MCF 10A (cell line): ENCODE measurements at regions of chr3 and their contacts with region 1.

Region 1: DNA sequence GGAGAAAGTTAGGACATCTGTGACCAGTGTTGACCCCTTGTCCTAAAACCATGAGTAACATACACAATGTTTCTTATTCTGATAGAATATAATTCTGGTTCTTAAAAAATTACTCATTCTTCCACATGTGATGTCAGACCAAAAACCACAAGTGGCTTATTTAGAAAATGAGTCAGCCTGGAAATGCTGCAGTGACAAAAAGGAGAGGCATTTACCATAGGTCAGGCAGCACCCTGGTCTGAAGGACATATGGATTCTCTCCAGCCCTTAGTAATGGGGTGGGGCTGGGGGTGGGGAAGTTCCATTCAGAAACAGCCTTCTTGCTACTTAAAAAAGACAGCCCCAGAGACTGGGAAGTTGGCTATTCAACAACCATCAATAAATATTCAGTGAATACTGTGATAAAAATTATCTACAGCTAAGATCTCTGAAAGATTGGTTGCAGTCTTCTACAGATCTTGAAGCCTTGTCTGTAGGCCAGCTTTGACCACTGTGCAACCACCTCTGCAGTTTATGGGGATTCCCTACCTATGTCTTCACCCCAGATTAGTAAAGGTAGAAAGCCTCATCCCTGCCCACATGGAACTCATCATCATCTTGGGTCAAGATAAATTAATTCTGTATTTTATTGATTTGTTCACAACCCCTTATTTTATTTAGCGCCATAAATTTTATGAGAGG is 34.9 kb upstream of the TIMP4 start:
- DNase-seq: peak; percentile 97
- H3K4me3 Mint-ChIP-seq: peak overlapping the region; percentile 24
- H3K27ac Mint-ChIP-seq: peak overlapping the region; percentile 89
- H3K4me1 Mint-ChIP-seq: peaks cover 42% of the 10 kb centered on the region
- H3K27me3 Mint-ChIP-seq: no peaks in the 10 kb centered on the region
- CTCF ChIP-seq: no peak

Region 2: GRCh38 chr3:11919390-11919789 is 274.2 kb before region 1 on chr3:
- CTCF ChIA-PET with region 1: no interaction called
- POLR2A ChIA-PET with region 1: no interaction called
- intact Hi-C with region 1: no loop called
- DNase-seq: no peak
- H3K4me3 Mint-ChIP-seq: no peak overlapping the region
- H3K27ac Mint-ChIP-seq: no peak overlapping the region
- H3K4me1 Mint-ChIP-seq: no peaks in the 10 kb centered on the region
- H3K27me3 Mint-ChIP-seq: peaks cover 14% of the 10 kb centered on the region
- CTCF ChIP-seq: no peak

Region 3: DNA sequence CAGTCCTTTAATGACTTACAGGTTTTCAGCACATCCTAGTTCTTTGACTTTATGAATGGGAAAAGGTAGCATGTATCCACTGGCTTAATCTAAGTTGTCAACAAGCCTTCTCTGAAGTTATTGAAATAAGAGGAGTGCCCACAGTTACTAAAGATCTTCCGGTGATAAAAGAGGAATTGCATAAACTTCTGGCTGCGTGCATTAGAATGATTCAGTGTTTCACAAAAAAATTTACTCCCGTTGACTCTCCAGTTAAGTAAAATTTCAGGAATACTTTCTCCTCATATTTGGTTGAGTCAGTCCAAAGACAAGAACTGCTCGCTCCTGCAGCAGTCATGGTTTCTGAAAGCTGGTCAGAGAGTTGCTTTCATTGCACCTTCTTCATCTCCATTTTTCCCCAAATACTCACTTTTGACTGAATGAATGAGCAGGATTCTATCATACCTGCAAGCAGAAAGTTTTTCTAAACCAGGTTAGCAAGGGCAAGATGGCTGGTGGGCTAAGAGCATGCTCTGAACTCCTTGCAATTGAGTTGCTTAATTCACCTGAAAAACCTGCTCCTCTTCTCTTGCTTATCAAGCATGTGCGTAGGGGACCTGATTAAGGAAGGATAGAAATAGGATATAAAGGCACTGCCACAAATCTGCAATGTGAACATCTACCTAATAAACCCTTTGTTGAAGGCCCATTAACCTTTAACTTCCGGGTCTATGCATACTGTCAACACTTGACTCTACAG is 29.3 kb after region 1 on chr3:
- CTCF ChIA-PET with region 1: interaction called, 4 read pairs
- POLR2A ChIA-PET with region 1: interaction called, 8 read pairs
- intact Hi-C with region 1: loop called (anchors 2 kb)
- DNase-seq: peak; percentile 79
- H3K4me3 Mint-ChIP-seq: peak overlapping the region; percentile 43
- H3K27ac Mint-ChIP-seq: peak overlapping the region; percentile 70
- H3K4me1 Mint-ChIP-seq: peaks cover 28% of the 10 kb centered on the region
- H3K27me3 Mint-ChIP-seq: no peaks in the 10 kb centered on the region
- CTCF ChIP-seq: no peak

Region 4: GRCh38 chr3:12246497-12247163 is 53.0 kb after region 1 on chr3:
- CTCF ChIA-PET with region 1: no interaction called
- POLR2A ChIA-PET with region 1: no interaction called
- intact Hi-C with region 1: no loop called
- DNase-seq: no peak
- H3K4me3 Mint-ChIP-seq: no peak overlapping the region
- H3K27ac Mint-ChIP-seq: no peak overlapping the region
- H3K4me1 Mint-ChIP-seq: no peaks in the 10 kb centered on the region
- H3K27me3 Mint-ChIP-seq: no peaks in the 10 kb centered on the region
- CTCF ChIP-seq: no peak

Region 5: DNA sequence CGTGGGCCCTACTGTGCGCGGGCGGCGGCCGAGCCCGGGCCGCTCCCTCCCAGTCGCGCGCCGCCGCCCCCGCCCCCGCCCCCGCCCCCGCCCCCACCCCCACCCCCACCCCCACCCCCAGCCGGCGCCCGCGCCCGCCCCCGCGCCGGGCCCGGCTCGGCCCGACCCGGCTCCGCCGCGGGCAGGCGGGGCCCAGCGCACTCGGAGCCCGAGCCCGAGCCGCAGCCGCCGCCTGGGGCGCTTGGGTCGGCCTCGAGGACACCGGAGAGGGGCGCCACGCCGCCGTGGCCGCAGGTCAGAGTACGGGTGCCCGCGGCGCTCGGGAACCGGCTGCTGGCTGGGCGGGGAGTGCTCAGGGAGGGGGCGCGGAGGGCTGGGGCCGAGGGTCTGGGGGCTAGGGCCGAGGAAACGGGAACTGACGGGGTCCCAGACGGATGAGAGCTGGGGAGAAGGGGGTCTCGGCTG is 94.1 kb after region 1 on chr3:
- CTCF ChIA-PET with region 1: no interaction called
- POLR2A ChIA-PET with region 1: interaction called, 3 read pairs
- intact Hi-C with region 1: loop called (anchors 1 kb)
- DNase-seq: peak; percentile 42
- H3K4me3 Mint-ChIP-seq: peak overlapping the region; percentile 70
- H3K27ac Mint-ChIP-seq: no peak overlapping the region
- H3K4me1 Mint-ChIP-seq: peaks cover 5% of the 10 kb centered on the region
- H3K27me3 Mint-ChIP-seq: no peaks in the 10 kb centered on the region
- CTCF ChIP-seq: no peak

Region 6: GRCh38 chr3:12522721-12523120 is 329.1 kb after region 1 on chr3:
- CTCF ChIA-PET with region 1: no interaction called
- POLR2A ChIA-PET with region 1: no interaction called
- intact Hi-C with region 1: no loop called
- DNase-seq: no peak
- H3K4me3 Mint-ChIP-seq: no peak overlapping the region
- H3K27ac Mint-ChIP-seq: no peak overlapping the region
- H3K4me1 Mint-ChIP-seq: no peaks in the 10 kb centered on the region
- H3K27me3 Mint-ChIP-seq: no peaks in the 10 kb centered on the region
- CTCF ChIP-seq: no peak